PC-9 (cell line): ENCODE measurements at regions of chr16 and their contacts with region 1.

Region 1: DNA sequence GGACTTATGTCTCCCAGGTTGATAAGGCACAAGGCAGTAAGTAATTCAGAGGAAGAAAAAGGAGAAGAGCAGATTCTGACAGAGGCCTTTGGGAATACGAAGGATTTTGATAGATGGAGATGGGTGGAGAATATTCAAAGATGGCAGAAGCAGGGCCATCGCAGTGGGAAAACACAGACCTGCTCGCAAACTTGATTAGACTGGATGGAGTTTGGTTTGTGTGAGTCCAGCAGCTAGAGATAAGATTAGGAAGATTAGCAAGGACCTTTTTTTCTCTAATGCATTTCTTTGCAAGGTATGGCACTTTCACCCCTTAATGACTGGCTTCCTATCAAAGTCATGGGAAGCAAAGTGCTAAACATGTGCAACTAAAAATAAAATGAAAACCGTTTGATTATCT is 196.7 kb downstream of the FTO start:
- DNase-seq: no peak
- H3K4me3 ChIP-seq: no peak overlapping the region
- H3K27ac ChIP-seq: no peak overlapping the region
- H3K4me1 ChIP-seq: peaks cover 27% of the 10 kb centered on the region
- H3K27me3 ChIP-seq: no peaks in the 10 kb centered on the region
- CTCF ChIP-seq: no peak

Region 2: DNA sequence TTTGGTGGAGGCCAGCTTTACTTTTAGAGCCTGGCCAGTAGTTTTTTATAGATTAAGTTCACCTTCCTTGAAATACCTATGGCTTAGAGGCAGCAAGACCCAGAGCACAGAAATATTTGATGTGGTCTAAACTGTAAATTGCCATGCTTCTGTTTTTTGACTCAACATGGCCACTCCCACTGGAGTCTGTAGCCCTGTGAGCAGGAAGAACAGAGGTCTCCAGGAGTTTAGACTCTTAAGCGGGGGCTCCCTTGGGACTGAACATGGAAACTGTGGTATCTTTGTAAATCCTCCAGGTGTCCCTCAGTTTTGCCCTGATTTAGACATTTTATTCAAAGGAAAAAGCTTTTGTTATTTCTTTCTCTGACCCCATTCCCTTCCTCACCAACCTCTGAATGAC is 51.1 kb before region 1 on chr16:
- CTCF ChIA-PET with region 1: no interaction called
- POLR2A ChIA-PET with region 1: interaction called, 15 read pairs
- intact Hi-C with region 1: no loop called
- DNase-seq: no peak
- H3K4me3 ChIP-seq: no peak overlapping the region
- H3K27ac ChIP-seq: no peak overlapping the region
- H3K4me1 ChIP-seq: no peaks in the 10 kb centered on the region
- H3K27me3 ChIP-seq: no peaks in the 10 kb centered on the region
- CTCF ChIP-seq: no peak

Region 3: DNA sequence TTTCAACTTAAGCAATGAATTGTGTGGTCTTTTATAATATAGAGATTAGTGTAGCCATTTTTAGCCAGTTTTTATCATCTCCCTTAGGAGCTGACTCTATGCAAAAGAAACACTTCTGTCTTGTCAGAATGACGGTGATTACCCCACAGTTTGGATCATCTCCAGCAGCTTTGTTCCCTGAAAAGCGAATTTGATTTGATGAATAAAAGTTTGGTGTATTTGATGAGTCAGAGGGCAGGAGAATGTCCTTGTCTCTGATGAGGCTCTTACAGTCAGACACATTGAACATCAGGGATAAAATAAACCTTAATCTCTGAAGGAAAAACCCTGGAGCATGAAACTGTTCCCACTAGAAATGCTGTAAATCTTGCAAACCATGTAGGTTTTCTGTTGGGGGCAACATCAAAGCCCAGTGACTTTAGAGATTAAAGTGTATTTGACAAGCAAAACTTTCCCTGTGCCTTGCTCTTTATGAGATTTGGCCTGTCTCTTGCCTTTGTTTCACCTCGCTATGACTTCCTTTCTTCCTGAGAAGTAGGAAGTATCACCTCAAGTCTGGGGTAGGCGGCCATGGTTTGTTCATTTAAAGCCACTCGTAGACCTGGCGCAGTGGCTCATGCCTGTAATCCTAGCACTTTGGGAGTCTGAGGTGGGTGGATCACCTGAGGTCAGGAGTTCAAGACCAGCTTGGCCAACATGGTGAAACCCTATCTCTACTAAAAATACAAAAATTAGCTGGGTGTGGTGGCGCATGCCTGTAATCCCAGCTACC is 12.6 kb after region 1 on chr16:
- CTCF ChIA-PET with region 1: no interaction called
- POLR2A ChIA-PET with region 1: no interaction called
- intact Hi-C with region 1: no loop called
- DNase-seq: no peak
- H3K4me3 ChIP-seq: no peak overlapping the region
- H3K27ac ChIP-seq: no peak overlapping the region
- H3K4me1 ChIP-seq: no peaks in the 10 kb centered on the region; the same call in 1 of the 2 replicates
- H3K27me3 ChIP-seq: no peaks in the 10 kb centered on the region
- CTCF ChIP-seq: no peak